HepG2 (cell line): ENCODE measurements at regions of chr14 and their contacts with region 1.

Region 1: DNA sequence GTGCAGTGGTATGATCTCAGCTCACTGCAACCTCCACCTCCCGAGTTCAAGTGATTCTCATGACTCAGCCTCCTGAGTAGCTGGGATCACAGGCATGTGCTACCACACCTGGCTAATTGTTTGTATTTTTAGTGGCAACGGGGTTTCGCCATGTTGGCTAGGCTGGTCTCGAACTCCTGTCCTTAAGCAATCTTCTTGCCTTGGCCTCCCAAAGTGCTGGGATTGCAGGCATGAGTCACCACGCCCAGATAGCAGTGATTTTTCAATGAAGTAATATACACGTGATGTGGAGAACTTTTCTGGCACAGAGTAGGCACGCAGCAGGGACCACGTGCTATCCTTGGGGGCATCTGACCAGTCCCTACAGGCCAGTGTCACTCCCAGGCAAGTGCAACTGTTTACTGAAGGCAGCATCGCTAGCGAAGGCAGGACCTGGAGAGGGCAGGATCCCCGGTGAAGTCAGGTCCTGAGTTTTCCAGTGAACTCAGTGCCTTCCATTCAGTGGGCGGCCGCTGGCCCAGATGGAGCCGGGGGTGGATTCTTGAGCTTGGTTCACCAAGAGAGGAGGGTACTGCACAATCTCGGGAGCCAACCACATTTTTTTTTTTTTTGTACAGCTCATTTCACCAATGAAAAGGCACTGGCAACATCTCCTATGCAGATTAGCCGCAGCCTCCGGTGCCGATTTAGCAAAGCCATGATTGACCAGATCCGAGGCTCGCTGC is 11.1 kb upstream of the CLMN start:
- DNase-seq: no peak
- ATAC-seq: no peak
- H3K4me3 ChIP-seq: no peak overlapping the region
- H3K27ac ChIP-seq: no peak overlapping the region
- H3K4me1 ChIP-seq: peaks cover 30% of the 10 kb centered on the region
- H3K27me3 ChIP-seq: peaks cover 0 to 31% of the 10 kb centered on the region in 2 experiments
- CTCF ChIP-seq: no peak
- EP300 ChIP-seq: no peak
- POLR2A ChIP-seq: no peak
- RAD21 ChIP-seq: no peak

Region 2: DNA sequence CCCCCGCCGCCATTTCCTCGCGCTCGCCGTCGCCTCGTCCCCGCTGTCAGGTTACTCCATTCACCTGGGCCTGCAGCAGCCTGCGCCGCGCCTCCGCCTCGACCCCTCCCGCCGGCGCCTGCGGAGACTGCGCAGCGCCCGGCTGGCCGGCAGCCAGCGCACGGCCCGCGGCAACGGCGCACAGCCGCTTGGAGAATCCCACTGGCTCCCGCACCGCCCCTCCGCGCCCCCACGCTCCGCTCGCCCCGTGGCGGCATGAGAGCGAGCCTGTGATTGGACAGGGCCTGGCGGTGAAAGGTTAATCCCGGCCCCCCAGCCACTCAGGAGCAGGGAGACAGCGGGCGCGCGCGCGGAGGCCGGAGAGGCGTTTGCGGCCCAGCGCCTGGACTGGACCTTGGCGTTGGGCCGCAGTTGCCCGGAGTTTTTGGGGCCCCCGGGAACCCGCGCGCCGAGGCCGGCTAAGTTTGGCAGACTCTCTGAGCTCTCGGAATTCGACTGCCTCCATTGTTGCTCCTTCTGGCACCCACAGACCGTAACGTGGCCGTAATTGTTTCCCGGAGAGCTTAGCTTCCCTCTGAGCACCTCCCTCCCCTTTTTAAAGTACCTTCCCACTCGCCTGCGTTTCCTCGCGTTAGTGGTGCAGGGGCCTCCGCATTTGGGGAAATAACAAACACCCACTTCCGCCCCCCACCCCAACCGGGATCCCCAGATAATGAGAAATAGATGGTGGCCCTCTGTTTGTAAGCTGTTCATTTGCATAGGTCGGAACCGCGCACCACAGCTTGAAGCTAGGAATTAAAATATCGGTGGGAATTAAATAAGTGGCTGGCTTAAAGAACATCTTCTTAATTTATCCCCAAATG is 173.2 kb before region 1 on chr14 and contains the start of gene DICER1:
- CTCF ChIA-PET with region 1: no interaction called
- POLR2A ChIA-PET with region 1: no interaction called
- in situ Hi-C with region 1: no loop called
- intact Hi-C with region 1: loop called (anchors 10 kb)
- DNase-seq: peak; percentile 88
- ATAC-seq: peak; percentile 90
- H3K4me3 ChIP-seq: peak within 1 kb of the TSS; percentile 81 to 96 (median 85)
- H3K27ac ChIP-seq: peak within 1 kb of the TSS; percentile 96
- H3K4me1 ChIP-seq: peaks cover 43% of the 10 kb centered on the region
- H3K27me3 ChIP-seq: no peaks in the 10 kb centered on the region; a peak in 1 of 5 replicates
- CTCF ChIP-seq: 0 out of 2 replicates have a peak, but pooled peaks have one; percentile 11
- EP300 ChIP-seq: no peak
- POLR2A ChIP-seq: peak; percentile 50 to 59; a peak in 3 of 4 replicates
- RAD21 ChIP-seq: no peak
- total RNA-seq, gene DICER1: 61.9 and 88.8 TPM in 2 replicates